Endothelial cell of umbilical vein (primary cell): ENCODE measurements at regions of chr11 and their contacts with region 1.

Region 1: GRCh38 chr11:77127232-77127911 is 674 bp upstream of the MYO7A start:
- DNase-seq: peak; percentile 57
- H3K4me3 ChIP-seq: peak overlapping the region in 2 of 3 experiments; percentile 23 to 24
- H3K27ac ChIP-seq: no peak overlapping the region
- H3K4me1 ChIP-seq: peaks cover 10% of the 10 kb centered on the region
- H3K27me3 ChIP-seq: no peaks in the 10 kb centered on the region
- CTCF ChIP-seq: peak; percentile 99 to 100
- POLR2A ChIP-seq: no peak

Region 2: DNA sequence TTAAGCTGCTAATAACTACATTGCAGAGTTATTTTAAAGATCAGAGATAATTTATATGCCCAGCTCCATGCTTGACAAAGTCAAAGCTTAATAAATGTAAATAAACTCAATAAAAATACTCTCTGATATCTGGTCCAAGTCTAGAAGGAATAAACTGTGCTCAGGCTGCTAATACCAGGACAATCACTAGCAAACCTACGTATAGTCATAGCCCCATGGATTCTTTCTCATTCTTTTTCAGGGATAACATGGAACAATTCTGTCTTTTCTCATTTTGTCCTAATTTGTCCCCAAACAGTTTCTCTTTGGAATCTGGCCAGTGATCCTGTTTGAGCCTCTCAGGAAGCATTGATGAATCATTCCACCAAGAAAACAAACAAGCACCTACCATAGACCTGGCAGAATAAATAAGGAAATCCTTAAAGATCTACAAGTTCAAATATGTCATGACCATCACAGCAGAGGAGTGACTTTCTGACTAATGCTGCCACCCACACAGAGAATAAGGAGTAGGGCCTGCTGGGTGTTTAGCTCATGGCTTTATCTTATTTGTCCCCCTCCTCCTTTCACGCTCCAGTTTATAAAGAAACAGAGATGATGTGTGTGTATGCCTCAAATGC is 107.3 kb before region 1 on chr11:
- CTCF ChIA-PET with region 1: no interaction called
- POLR2A ChIA-PET with region 1: no interaction called
- dilution Hi-C with region 1: no loop called
- intact Hi-C with region 1: no loop called
- DNase-seq: peak; percentile 77
- H3K4me3 ChIP-seq: no peak overlapping the region
- H3K27ac ChIP-seq: no peak overlapping the region
- H3K4me1 ChIP-seq: peaks cover 20% of the 10 kb centered on the region
- H3K27me3 ChIP-seq: no peaks in the 10 kb centered on the region
- CTCF ChIP-seq: no peak
- POLR2A ChIP-seq: no peak

Region 3: DNA sequence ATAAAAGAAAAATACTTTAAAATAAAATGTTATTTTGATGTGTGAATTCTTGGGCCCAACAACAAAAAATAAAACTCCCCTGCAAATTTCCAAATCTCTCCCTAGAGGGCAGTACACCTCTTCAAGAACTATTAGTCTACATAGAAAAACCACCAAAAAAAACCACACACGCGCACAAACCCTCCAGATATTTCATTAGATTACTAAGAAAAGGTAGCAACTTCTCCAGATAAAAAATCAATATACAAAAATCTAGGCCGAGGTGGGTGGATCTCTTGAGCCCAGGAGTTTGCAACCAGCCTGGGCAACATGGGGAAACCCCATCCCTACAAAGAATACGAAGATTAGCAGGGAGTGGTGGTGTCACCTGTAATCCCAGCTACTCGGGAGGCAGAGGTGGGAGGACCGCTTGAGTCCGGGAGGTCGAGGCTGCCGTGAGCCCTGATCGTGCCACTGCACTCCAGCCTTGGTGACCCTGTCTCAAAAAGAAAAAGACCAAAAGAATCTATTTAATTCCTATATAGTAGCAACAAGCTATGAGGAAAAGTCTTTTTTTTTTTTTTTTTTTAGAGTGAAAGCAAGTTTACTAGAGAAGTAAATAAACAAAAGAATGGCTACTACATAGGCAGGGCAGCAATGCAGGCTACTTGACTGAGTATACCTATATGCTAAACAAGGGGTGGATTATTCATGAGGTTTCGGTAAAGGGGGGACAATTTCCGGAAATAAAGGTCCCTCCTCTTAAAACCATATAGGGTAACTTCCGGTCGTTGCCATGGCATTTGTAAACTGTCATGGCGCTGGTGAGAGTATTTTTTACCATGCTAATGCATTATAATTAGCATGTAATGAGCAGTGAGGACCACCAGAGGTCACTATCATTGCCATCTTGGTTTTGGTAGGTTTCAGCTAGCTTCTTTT is 80.1 kb before region 1 on chr11:
- CTCF ChIA-PET with region 1: interaction called, 18 read pairs
- POLR2A ChIA-PET with region 1: no interaction called
- dilution Hi-C with region 1: no loop called
- intact Hi-C with region 1: no loop called
- DNase-seq: peak; percentile 97
- H3K4me3 ChIP-seq: peak overlapping the region; percentile 28 to 36 (median 31)
- H3K27ac ChIP-seq: no peak overlapping the region
- H3K4me1 ChIP-seq: peaks cover 5% of the 10 kb centered on the region
- H3K27me3 ChIP-seq: peaks cover 4 to 10% of the 10 kb centered on the region in 2 experiments
- CTCF ChIP-seq: peak; percentile 48 to 59
- POLR2A ChIP-seq: no peak

Region 4: DNA sequence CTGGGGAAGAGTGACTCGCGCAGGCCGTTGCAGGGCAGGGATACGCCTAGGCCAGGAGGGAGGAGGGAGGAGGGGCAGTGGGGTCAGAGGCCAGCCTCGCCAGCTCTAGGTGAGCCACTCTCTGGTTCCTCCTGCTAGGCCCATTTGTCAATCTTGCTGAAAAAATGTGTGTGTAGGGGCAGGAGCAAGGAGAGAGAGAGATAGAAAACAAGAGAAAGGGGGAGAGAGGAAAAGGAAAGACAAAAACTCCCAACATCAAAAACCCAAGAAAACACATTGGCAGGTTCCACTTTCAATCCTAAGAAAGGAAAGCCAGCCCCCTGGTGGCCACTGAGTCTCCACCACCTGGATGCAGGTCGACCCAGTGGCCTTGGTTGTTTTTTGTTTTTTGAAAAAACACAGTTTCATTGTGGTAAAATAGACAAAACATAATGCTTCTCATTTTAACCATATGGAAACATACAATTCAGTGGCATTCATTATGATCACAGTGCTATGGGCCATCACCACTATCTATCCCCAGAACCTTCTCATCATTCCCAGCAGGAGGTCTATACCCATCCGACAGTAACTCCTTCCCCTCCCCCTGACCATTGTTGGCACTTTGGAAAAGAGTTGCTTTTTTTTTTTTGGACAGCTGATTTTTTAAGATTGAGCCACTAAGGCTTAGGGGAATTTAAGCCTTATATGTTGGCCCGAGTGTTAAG is 13.8 kb before region 1 on chr11:
- CTCF ChIA-PET with region 1: interaction called, 19 read pairs
- POLR2A ChIA-PET with region 1: no interaction called
- dilution Hi-C with region 1: no loop called
- intact Hi-C with region 1: no loop called
- DNase-seq: peak; percentile 26
- H3K4me3 ChIP-seq: no peak overlapping the region
- H3K27ac ChIP-seq: no peak overlapping the region
- H3K4me1 ChIP-seq: peaks cover 5% of the 10 kb centered on the region
- H3K27me3 ChIP-seq: no peaks in the 10 kb centered on the region
- CTCF ChIP-seq: peak; percentile 52 to 76
- POLR2A ChIP-seq: no peak

Region 5: DNA sequence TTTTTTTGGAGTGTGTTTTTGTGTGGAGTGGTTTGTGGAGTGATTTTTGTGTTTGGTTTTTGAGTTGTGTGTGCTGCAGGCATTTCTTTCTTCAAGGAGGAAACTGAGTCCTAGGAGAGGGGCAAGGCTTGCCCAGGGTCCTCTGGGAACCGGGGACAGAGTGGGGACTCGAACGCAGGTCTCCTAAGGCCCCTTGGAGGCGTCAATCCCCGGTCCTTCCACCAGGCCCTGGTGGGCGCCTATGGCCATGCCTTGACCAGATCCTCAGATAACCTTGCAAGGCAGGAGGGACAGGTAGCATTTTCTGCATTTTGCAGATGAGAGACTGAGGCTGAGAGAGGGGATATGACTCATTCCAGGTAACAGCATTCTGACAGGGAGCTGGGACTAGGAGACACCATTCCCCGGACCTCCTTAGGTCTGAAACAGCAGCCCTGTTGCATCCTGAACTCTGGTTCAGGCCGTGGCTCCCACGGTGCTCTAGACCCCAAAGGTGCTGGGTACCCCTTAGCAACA is 39.8 kb after region 1 on chr11:
- CTCF ChIA-PET with region 1: interaction called, 18 read pairs
- POLR2A ChIA-PET with region 1: no interaction called
- dilution Hi-C with region 1: no loop called
- intact Hi-C with region 1: no loop called
- DNase-seq: no peak
- H3K4me3 ChIP-seq: no peak overlapping the region
- H3K27ac ChIP-seq: no peak overlapping the region
- H3K4me1 ChIP-seq: peaks cover 11% of the 10 kb centered on the region
- H3K27me3 ChIP-seq: no peaks in the 10 kb centered on the region
- CTCF ChIP-seq: no peak
- POLR2A ChIP-seq: no peak

Region 6: GRCh38 chr11:77198440-77198849 is 71.1 kb after region 1 on chr11:
- CTCF ChIA-PET with region 1: interaction called, 22 read pairs
- POLR2A ChIA-PET with region 1: no interaction called
- dilution Hi-C with region 1: no loop called
- intact Hi-C with region 1: no loop called
- DNase-seq: peak; percentile 11
- H3K4me3 ChIP-seq: no peak overlapping the region
- H3K27ac ChIP-seq: no peak overlapping the region
- H3K4me1 ChIP-seq: no peaks in the 10 kb centered on the region
- H3K27me3 ChIP-seq: no peaks in the 10 kb centered on the region
- CTCF ChIP-seq: peak; percentile 43 to 47
- POLR2A ChIP-seq: no peak

Region 7: DNA sequence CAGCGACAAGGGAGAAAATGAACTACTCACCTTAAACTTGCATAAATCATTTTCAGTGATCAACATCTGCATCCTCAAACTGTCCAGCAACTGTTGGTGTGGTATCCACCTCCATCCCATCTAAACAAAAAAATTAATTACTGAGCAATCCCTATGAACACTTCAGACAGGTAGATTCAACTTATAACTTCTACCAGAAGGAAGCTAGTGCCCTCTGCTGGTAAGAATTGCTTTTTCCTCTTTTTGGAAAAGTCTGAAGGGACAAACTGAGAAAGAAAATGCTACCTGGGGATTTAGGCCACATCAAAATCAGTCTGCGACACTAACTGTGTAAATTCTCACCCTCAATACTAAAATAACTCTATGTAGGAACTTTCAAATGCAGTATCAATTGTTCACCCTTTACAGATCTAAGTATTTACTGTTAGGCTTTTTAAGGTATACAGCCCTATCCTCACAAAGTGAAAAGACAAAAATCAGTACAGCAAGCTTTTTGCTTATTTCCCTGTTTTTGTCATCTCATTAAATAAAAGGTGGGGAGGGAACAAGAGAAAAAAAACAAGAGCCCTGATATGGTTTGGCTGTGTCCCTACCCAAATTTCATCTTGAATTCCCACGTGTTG is 492.3 kb after region 1 on chr11:
- CTCF ChIA-PET with region 1: interaction called, 35 read pairs
- POLR2A ChIA-PET with region 1: no interaction called
- dilution Hi-C with region 1: no loop called
- intact Hi-C with region 1: loop called (anchors 1 kb)
- DNase-seq: peak; percentile 57
- H3K4me3 ChIP-seq: no peak overlapping the region
- H3K27ac ChIP-seq: no peak overlapping the region
- H3K4me1 ChIP-seq: no peaks in the 10 kb centered on the region
- H3K27me3 ChIP-seq: no peaks in the 10 kb centered on the region
- CTCF ChIP-seq: peak; percentile 43 to 59
- POLR2A ChIP-seq: no peak